Psoas muscle (tissue), 8 donors: ENCODE measurements at regions of chr1 and their contacts with region 1.

Region 1: GRCh38 chr1:68232354-68233148 is at the start of gene WLS:
- DNase-seq: peak; percentile 76 to 88
- ATAC-seq: peak; percentile 84 to 93 (median 90)
- H3K4me3 ChIP-seq: peak within 1 kb of the TSS; percentile 82
- H3K27ac ChIP-seq: peak within 1 kb of the TSS; percentile 72
- H3K4me1 ChIP-seq: peaks cover 8% of the 10 kb centered on the region
- H3K27me3 ChIP-seq: no peaks in the 10 kb centered on the region
- CTCF ChIP-seq: peak; percentile 10
- total RNA-seq, gene WLS: 15.2 to 32.3 (median 17.5) TPM

Region 2: GRCh38 chr1:67832737-67833601 is 399.6 kb before region 1 on chr1 and contains the start of gene GNG12:
- intact Hi-C with region 1: loop called in 1 of 2 experiments (anchors 10 kb)
- DNase-seq: peak; percentile 74 to 84
- ATAC-seq: peak; percentile 79 to 82 (median 82)
- H3K4me3 ChIP-seq: peak within 1 kb of the TSS; percentile 91
- H3K27ac ChIP-seq: peak within 1 kb of the TSS; percentile 85
- H3K4me1 ChIP-seq: peaks cover 18% of the 10 kb centered on the region
- H3K27me3 ChIP-seq: no peaks in the 10 kb centered on the region
- CTCF ChIP-seq: no peak
- total RNA-seq, gene GNG12: 18.6 to 25.1 (median 20.3) TPM

Region 3: DNA sequence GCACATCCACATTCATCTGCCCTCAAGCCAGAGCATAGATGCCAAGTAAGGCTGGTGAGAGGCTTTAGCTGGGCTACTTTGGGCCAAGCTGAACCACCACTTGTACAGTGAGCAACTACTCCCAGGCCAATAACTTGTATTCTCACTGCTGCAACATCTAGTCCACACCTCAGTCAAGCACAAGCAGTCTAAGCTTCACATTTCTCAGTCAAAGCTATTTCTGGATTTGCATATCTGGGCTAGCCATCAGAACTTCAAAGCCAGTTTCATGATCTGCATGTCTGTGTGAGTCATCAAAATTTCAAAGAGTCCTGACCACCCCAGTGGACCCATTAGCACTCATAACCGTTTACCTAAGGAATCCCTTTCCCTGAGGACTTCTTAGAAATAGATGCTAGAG is 104.4 kb before region 1 on chr1:
- intact Hi-C with region 1: loop called in 1 of 2 experiments (anchors 5 kb)
- DNase-seq: no peak
- ATAC-seq: peak; percentile 80 to 93 (median 88)
- H3K4me3 ChIP-seq: no peak overlapping the region
- H3K27ac ChIP-seq: peak overlapping the region; percentile 82
- H3K4me1 ChIP-seq: peaks cover 25% of the 10 kb centered on the region
- H3K27me3 ChIP-seq: no peaks in the 10 kb centered on the region
- CTCF ChIP-seq: no peak

Region 4: DNA sequence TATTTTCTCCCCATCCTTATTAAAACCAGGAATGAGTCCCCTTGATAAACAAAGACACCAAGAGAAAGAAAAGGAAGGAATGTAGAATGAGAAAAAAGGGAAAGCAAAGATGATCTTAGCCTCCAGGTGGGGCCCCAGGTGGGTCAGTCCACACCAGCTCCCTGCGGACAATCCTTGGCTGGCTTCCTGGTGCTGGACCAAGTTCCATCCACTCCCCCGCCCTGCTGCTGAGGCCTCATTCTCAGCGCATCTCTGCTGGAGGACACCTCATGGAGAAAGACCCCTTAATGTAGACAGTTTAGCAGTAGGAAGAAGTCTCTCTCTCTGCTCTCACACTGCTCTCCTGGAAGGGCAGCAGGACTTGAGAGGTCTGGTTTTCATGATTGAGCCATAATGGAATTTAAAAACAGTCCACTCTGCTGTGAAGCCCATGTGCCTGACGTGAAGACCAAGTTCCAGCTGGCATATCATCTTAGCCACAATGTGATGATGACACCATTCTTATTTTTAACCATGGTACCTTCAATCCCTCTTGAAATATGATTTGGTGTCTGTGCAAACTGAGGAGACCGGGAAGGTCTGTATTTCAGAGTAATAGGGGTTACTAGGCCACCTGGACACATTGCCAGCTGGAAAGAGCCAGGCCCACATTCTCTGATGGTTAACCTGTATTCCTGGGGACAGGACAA is 83.3 kb before region 1 on chr1:
- intact Hi-C with region 1: loop called in 1 of 2 experiments (anchors 5 kb)
- DNase-seq: peak; percentile 53 to 82
- ATAC-seq: peak; percentile 96 to 97 (median 97)
- H3K4me3 ChIP-seq: no peak overlapping the region
- H3K27ac ChIP-seq: peak overlapping the region; percentile 83
- H3K4me1 ChIP-seq: peaks cover 26% of the 10 kb centered on the region
- H3K27me3 ChIP-seq: no peaks in the 10 kb centered on the region
- CTCF ChIP-seq: no peak

Region 5: DNA sequence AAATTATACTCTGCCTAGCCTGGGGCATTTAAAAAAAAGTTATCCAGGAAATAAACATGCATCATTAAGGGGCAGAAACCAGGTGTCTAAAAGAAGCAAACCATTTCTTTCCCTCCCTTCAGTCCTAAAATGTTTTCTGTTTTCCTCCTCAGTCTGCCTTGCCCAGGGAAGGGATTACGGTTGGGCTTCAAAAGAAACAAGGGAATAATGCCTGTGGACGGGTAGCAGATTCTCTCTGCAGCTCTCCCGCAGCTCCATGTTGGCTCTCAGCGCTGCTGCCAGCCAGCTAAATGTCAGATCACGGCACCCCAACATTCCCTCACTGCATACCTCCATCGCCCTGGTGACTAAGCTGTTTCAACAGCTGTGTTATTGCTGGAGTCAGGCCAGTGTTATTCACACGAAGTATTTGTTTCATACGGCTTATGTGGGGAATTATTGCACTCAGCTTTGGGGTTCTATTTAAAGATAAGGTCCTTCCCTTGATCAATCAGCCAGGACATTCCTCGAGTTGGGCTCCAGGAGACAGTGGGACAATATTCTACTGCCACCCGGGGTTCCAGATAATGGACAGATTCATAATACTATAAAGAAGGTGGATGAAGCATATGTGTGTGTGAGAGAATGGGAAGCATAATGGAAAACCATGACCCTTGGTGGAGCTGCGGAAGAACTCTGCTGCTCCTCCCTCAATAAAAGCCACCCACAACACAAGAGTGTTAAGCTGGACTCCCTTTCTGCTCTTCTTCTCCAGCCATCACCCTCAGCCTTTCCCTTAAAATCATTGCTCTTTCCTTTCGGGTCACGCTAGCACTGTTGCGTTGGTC is 58.4 kb before region 1 on chr1:
- intact Hi-C with region 1: loop called in 1 of 2 experiments (anchors 5 kb)
- DNase-seq: peak; percentile 38 to 63
- ATAC-seq: peak; percentile 66 to 86 (median 84)
- H3K4me3 ChIP-seq: peak overlapping the region; percentile 46
- H3K27ac ChIP-seq: peak overlapping the region; percentile 87
- H3K4me1 ChIP-seq: peaks cover 52% of the 10 kb centered on the region
- H3K27me3 ChIP-seq: no peaks in the 10 kb centered on the region
- CTCF ChIP-seq: no peak

Region 6: GRCh38 chr1:68321084-68321685 is 88.6 kb after region 1 on chr1:
- intact Hi-C with region 1: loop called in 1 of 2 experiments (anchors 5 kb)
- DNase-seq: peak; percentile 44 to 72
- ATAC-seq: peak; percentile 76 to 96 (median 86)
- H3K4me3 ChIP-seq: no peak overlapping the region
- H3K27ac ChIP-seq: no peak overlapping the region
- H3K4me1 ChIP-seq: no peaks in the 10 kb centered on the region
- H3K27me3 ChIP-seq: no peaks in the 10 kb centered on the region
- CTCF ChIP-seq: peak; percentile 70